ENCODE measurements at regions of chr6 and their contacts with region 1.

Region 1: GRCh38 chr6:149342525-149342924 is 25.0 kb downstream of the TAB2 start:
- DNase-seq: no peak
- ATAC-seq: peak; percentile 65
- H3K4me3 Mint-ChIP-seq: peak overlapping the region; percentile 38
- H3K27ac Mint-ChIP-seq: peak overlapping the region; percentile 71
- H3K4me1 Mint-ChIP-seq: peaks cover 62% of the 10 kb centered on the region
- H3K27me3 Mint-ChIP-seq: no peaks in the 10 kb centered on the region
- CTCF ChIP-seq: no peak

Region 2: DNA sequence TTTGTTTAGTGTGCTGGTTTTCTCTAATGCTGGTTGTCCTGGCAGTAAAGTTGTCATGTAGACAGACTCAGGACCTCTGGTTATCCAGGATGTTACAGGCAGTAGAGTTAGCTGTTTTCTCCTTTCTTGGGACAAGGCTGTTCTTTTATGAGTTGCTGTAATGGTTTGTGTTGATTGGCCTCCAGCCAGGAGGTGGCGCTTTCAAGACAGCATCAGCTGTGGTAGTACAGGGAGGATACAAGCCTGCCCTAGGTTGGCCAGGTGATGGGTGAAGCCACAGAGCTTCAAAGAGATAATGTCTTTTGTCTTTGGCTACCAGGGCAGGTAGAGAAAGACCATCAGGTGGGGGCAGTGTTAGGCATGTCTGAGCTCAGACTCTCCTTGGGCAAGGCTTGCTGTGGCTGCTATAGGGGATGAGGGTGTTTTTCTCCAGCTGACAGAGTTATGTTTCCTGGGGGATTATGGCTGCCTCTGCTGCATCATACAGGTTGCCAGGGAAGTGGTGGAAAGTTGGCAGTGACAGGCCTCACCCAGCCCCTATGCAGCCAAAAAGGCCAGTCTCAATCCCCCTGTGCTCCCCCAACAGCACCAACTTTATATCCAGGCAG is 152.2 kb before region 1 on chr6:
- CTCF ChIA-PET with region 1: interaction called, 8 read pairs
- POLR2A ChIA-PET with region 1: no interaction called
- intact Hi-C with region 1: loop called (anchors 5 kb)
- DNase-seq: peak; percentile 56
- ATAC-seq: peak; percentile 82
- H3K4me3 Mint-ChIP-seq: no peak overlapping the region
- H3K27ac Mint-ChIP-seq: no peak overlapping the region
- H3K4me1 Mint-ChIP-seq: peaks cover 9% of the 10 kb centered on the region
- H3K27me3 Mint-ChIP-seq: no peaks in the 10 kb centered on the region
- CTCF ChIP-seq: no peak

Region 3: GRCh38 chr6:149301063-149301462 is 41.5 kb before region 1 on chr6:
- CTCF ChIA-PET with region 1: no interaction called
- POLR2A ChIA-PET with region 1: no interaction called
- intact Hi-C with region 1: no loop called
- DNase-seq: no peak
- ATAC-seq: no peak
- H3K4me3 Mint-ChIP-seq: no peak overlapping the region
- H3K27ac Mint-ChIP-seq: no peak overlapping the region
- H3K4me1 Mint-ChIP-seq: no peaks in the 10 kb centered on the region
- H3K27me3 Mint-ChIP-seq: no peaks in the 10 kb centered on the region
- CTCF ChIP-seq: no peak

Region 4: GRCh38 chr6:149357726-149358538 is 15.4 kb after region 1 on chr6:
- CTCF ChIA-PET with region 1: no interaction called
- POLR2A ChIA-PET with region 1: interaction called, 3 read pairs
- intact Hi-C with region 1: loop called (anchors 2 kb)
- DNase-seq: no peak
- ATAC-seq: no peak
- H3K4me3 Mint-ChIP-seq: no peak overlapping the region
- H3K27ac Mint-ChIP-seq: peak overlapping the region; percentile 46
- H3K4me1 Mint-ChIP-seq: peaks cover 58% of the 10 kb centered on the region
- H3K27me3 Mint-ChIP-seq: no peaks in the 10 kb centered on the region
- CTCF ChIP-seq: no peak

Region 5: DNA sequence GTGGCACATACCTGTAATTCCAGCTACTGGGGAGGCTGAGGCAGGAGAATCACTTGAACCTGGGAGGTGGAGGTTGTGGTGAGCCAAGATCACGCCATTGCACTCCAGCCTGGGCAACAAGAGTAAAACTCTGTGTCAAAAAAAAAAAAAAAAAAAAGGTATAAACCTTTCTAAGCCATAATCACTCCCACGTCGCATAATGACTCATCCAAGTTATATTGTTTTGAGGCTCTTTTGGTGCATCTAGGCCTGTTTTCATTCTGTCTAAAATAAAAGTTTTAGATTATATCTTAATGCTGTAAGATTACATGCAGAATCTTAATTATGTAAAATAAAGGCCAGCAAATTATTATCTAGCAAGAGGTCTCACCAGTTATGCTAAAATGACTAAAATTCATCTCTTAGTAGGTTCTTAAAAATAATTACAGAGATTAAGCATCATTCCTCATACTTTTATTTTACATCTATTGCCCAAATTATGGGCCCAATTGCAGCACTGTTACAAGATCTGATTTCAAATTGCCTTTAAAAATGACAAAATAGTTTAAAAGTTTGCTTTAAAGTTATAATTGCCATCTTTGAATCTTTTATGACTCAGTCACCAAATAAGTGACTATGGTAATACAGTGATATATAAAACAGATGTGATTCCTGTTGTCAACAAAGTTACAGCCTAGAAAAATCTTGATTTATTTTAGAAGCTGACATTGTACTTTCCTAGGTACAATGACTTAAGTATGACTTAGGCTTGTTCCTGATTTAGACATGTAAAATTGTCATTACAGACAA is 47.2 kb after region 1 on chr6:
- CTCF ChIA-PET with region 1: no interaction called
- POLR2A ChIA-PET with region 1: no interaction called
- intact Hi-C with region 1: no loop called
- DNase-seq: no peak
- ATAC-seq: no peak
- H3K4me3 Mint-ChIP-seq: no peak overlapping the region
- H3K27ac Mint-ChIP-seq: no peak overlapping the region
- H3K4me1 Mint-ChIP-seq: peaks cover 18% of the 10 kb centered on the region
- H3K27me3 Mint-ChIP-seq: no peaks in the 10 kb centered on the region
- CTCF ChIP-seq: no peak